ENCODE measurements at regions of chr1 and their contacts with region 1.

Region 1: DNA sequence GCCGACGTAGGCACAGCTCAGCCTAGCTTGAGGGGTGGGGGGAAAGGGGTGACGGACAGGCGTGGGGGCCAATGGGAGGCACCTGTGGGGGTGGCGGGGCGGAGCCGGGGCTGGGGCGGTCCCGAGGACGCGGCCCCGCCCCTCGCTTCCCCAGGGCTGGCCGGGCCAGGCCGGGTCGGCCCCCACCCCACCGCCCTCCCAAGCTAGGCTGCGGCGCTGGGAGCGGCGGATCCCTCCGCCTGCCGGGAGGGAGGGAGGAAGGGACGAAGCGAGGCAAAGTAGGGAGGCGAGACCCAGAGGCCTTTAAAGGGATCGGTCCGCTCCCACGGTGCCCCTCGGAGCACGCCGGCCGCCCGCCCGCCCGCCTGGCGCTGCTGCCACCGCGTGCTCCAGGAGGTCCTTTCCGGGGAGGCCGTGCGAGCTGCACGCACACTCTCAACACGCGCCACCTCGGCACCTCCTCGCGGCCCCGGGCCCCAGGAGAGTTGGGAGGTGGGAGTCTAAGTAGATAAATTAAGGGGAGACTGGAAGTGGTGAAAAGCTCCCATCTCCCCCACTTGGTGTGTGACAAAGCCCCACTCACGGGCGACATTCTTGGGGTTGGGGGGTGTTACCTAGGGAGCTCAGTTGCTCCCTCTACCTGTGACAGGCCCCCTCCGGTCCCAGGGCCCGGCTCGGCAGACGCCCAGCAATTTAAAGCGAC is 373 bp upstream of the MEF2D start:
- DNase-seq: peak; percentile 82 to 96
- H3K4me3 ChIP-seq: peak overlapping the region; percentile 86 to 100
- H3K27ac ChIP-seq: peak overlapping the region; percentile 99 to 100
- H3K4me1 ChIP-seq: peaks cover 34 to 61% of the 10 kb centered on the region in 2 donors
- H3K27me3 ChIP-seq: no peaks in the 10 kb centered on the region
- CTCF ChIP-seq: peak in 2 of 3 experiments; percentile 39 to 55

Region 2: DNA sequence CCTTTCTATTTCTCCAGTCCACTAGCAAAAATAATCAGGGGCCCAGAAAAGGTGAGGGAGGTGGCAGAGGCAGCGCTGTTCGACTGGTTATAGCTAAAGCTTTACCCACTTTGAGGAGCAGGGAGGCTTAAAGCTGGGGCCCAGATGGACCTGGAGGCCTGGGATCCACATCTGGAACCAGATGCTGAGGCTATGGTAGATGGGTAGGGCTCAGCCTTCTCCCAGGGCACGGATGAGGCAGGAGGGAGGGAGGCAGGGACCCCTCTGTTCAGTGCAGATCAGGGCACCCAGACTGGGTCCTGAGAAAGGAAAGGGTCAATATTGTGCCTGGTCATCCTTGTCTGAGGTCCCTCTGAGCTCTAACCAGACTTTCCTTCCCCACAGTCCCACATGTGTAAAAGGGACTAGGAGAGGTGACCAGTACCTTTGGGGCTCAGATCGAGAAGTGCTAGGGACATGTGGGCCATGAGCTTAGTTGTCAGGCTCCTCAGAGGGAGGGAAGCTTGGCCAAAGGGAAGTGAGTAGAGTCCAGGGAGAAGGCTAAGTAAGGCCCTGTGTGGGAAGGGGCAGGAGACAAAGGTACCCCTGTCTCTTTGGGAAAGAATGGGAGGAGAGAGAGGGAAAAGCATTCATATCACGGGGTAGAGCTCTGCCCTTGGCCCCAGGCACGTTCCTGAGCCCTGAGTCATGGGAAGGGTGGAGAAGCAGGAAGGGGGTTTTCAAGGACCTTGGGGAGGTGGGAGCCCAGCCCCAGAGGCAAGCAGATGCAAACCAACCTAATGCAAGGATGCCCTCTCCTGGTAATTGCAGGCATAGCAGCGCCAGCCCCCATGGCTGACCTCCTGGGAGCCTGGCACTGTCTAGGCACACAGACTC is 371.0 kb before region 1 on chr1:
- intact Hi-C with region 1: loop called (anchors 10 kb)
- DNase-seq: peak; percentile 66 to 97
- H3K4me3 ChIP-seq: peak overlapping the region; percentile 46 to 93
- H3K27ac ChIP-seq: peak overlapping the region; percentile 97
- H3K4me1 ChIP-seq: peaks cover 32 to 52% of the 10 kb centered on the region in 2 donors
- H3K27me3 ChIP-seq: no peaks in the 10 kb centered on the region
- CTCF ChIP-seq: peak; percentile 96 to 98 (median 96)

Region 3: GRCh38 chr1:156338180-156338973 is 162.6 kb before region 1 on chr1 and contains the starts of genes CCT3 and TSACC:
- intact Hi-C with region 1: loop called (anchors 5 kb)
- DNase-seq: peak; percentile 99 to 100
- H3K4me3 ChIP-seq: peak within 1 kb of the TSS; percentile 79 to 83
- H3K27ac ChIP-seq: peak within 1 kb of the TSS; percentile 74 to 82
- H3K4me1 ChIP-seq: peaks cover 13% of the 10 kb centered on the region in 2 donors
- H3K27me3 ChIP-seq: no peaks in the 10 kb centered on the region
- CTCF ChIP-seq: no peak
- total RNA-seq, gene CCT3: 109 TPM
- total RNA-seq, gene TSACC: not detected

Region 4: GRCh38 chr1:156379420-156380165 is 121.4 kb before region 1 on chr1:
- intact Hi-C with region 1: no loop called
- DNase-seq: no peak
- H3K4me3 ChIP-seq: no peak overlapping the region
- H3K27ac ChIP-seq: no peak overlapping the region
- H3K4me1 ChIP-seq: no peaks in the 10 kb centered on the region
- H3K27me3 ChIP-seq: no peaks in the 10 kb centered on the region
- CTCF ChIP-seq: no peak

Region 5: DNA sequence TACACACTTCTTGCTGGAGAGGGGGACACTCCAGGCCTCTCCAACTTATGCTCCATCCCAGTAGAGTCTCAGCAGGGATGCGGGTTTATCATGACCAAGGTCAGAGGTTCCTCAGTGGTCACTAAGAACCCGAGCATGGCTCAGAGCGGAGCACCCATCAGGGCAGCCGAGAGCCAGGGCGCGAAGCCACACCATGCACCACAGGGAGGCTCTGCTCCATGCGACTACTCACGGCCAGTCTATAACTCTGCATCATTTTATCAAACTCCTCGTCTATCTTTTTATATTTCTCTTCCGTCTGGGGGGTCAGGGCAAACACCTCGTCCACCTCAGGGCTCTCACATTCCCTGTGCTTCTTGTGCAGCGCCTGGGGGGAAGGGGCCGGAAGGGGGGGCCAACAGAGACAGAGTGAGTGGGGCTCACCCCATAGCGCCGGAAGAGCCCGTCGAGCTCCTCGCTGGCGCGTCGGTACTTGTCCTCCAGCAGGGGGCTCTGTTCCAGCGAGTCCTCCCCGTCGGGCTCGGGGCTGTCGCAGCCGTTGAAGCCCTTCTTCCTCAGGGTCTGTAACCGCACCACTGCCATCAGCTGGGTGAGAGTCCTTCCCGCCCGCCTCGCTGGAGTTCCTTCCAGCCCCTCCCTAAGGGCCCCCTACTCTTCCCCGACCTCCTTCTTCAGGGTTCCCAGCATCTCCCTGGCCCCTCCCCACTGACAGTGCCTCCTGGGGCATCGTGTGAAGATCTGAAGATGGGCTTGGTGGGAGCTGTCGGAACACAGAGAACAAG is 20.3 kb before region 1 on chr1:
- intact Hi-C with region 1: loop called (anchors 1 kb)
- DNase-seq: no peak
- H3K4me3 ChIP-seq: no peak overlapping the region
- H3K27ac ChIP-seq: peak overlapping the region; percentile 86 to 87
- H3K4me1 ChIP-seq: peaks cover 26 to 80% of the 10 kb centered on the region in 2 donors
- H3K27me3 ChIP-seq: no peaks in the 10 kb centered on the region
- CTCF ChIP-seq: peak; percentile 58 to 64 (median 62)

Region 6: GRCh38 chr1:156751758-156752757 is 251.1 kb after region 1 on chr1:
- intact Hi-C with region 1: loop called (anchors 2 kb)
- DNase-seq: peak; percentile 86 to 98
- H3K4me3 ChIP-seq: peak overlapping the region; percentile 73 to 91
- H3K27ac ChIP-seq: peak overlapping the region; percentile 87 to 89
- H3K4me1 ChIP-seq: peaks cover 10 to 28% of the 10 kb centered on the region in 2 donors
- H3K27me3 ChIP-seq: no peaks in the 10 kb centered on the region
- CTCF ChIP-seq: peak in 1 of 3 experiments; percentile 27

Measured in ascending aorta (tissue), 2 donors.